ENCODE measurements at regions of chr3 and their contacts with region 1.

Region 1: DNA sequence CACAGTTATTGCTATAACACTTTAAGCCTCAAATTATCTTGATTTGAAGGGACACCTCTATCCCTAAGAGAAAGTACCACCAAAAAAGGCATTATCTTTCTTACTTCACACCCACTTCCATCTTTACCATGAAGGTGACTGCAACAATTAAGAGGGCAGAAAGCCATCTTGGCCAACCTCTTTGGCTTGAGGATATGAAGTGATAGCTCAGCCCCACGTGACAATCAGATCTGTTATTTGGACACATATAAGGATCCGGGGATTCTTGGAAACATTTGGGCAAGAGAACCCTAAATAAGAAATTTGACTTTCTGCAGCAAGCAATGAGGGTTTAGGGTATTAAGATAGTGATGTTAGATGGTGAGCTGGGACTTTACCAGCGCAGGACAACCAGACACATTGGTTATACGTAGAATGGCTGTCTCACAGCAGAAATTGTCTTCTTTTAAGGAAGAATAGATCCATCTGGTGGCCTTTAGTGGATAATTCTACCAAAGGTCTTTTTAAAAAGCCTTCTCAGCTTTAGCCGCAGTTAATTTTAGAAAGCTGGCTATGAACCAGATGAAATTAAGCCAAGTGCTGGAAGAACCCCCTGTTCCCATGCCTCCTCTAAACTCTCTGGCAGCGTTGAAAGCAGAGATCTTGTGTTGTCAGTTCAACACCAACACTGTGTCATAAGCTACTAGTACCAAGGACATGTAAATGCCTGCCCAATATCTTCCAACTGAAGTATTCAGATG is 12.3 kb downstream of the HCLS1 start:
- DNase-seq: no peak
- H3K4me3 ChIP-seq: no peak overlapping the region
- H3K27ac ChIP-seq: peak overlapping the region in 1 of 2 donors; percentile 27
- H3K4me1 ChIP-seq: peaks cover 0 to 3% of the 10 kb centered on the region in 2 donors
- H3K27me3 ChIP-seq: no peaks in the 10 kb centered on the region
- CTCF ChIP-seq: no peak
- POLR2A ChIP-seq: no peak

Region 2: GRCh38 chr3:121637922-121638321 is 10.5 kb before region 1 on chr3:
- intact Hi-C with region 1: loop called (anchors 1 kb)
- DNase-seq: no peak
- H3K4me3 ChIP-seq: no peak overlapping the region
- H3K27ac ChIP-seq: no peak overlapping the region
- H3K4me1 ChIP-seq: no peaks in the 10 kb centered on the region
- H3K27me3 ChIP-seq: no peaks in the 10 kb centered on the region
- CTCF ChIP-seq: no peak
- POLR2A ChIP-seq: no peak

Region 3: GRCh38 chr3:122392868-122393844 is 744.8 kb after region 1 on chr3:
- intact Hi-C with region 1: no loop called
- DNase-seq: no peak
- H3K4me3 ChIP-seq: no peak overlapping the region
- H3K27ac ChIP-seq: no peak overlapping the region
- H3K4me1 ChIP-seq: no peaks in the 10 kb centered on the region
- H3K27me3 ChIP-seq: no peaks in the 10 kb centered on the region
- CTCF ChIP-seq: peak; percentile 28 to 59 (median 58)
- POLR2A ChIP-seq: no peak